ENCODE measurements at regions of chr17 and their contacts with region 1.

Region 1: DNA sequence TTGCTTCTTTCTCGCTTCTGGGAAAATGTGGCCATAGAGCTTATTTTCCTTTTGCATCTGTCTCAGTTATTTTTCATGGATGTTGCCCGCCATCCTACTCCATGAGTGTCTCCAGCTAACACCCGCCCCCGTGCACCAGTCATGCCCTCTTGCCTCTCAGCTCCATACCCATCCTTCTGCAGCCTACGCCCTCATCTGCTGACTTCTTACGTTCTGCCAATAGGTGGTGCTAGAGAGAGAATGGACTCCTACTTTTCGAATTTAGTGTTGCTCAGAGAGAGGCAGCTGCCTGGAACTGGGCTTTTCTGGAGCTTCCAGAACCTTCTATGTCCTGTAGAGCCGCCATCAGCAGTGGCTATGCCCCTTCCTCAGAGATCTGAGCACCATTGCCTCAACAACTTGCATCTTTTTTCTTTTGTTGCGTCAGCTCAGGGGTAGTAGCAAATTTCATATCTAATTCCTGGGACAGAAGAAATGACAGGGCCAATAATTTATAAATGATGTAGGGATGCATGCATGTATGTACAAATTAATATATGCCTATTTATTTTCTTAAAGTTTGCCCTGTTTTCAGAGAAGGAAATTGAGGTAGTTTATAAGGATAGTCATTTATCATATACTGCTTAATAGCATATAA is 119.7 kb upstream of the MYOCD start:
- DNase-seq: no peak
- H3K4me3 ChIP-seq: no peak overlapping the region
- H3K27ac ChIP-seq: no peak overlapping the region
- H3K27me3 ChIP-seq: no peaks in the 10 kb centered on the region
- CTCF ChIP-seq: peak; percentile 87

Region 2: GRCh38 chr17:12478311-12478710 is 67.7 kb before region 1 on chr17:
- CTCF ChIA-PET with region 1: interaction called, 20 read pairs
- POLR2A ChIA-PET with region 1: no interaction called
- DNase-seq: no peak
- H3K4me3 ChIP-seq: no peak overlapping the region
- H3K27ac ChIP-seq: no peak overlapping the region
- H3K27me3 ChIP-seq: no peaks in the 10 kb centered on the region
- CTCF ChIP-seq: no peak

Region 3: DNA sequence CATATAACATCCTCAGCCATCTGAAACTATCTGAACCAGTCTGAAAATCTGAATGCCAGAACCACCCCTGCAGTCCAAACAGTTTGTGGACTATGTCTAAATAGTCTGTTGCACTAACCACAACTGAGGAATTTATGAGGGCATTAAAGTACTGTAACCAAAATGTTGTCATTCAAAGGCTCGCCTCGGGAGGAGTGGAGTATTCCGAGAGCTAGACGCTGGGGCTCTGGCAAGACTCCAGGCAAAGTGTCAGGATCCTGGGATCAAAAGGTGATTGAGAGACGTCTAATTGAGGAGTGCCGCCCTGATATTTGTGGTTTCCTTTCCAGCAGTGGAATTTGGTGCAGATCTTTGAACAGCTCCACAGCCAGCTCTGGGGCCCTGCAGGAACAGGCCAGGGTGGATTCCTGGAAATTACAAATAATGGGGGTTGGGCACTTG is 23.2 kb before region 1 on chr17:
- CTCF ChIA-PET with region 1: interaction called, 21 read pairs
- POLR2A ChIA-PET with region 1: no interaction called
- DNase-seq: no peak
- H3K4me3 ChIP-seq: no peak overlapping the region
- H3K27ac ChIP-seq: no peak overlapping the region
- H3K27me3 ChIP-seq: no peaks in the 10 kb centered on the region
- CTCF ChIP-seq: no peak

Region 4: DNA sequence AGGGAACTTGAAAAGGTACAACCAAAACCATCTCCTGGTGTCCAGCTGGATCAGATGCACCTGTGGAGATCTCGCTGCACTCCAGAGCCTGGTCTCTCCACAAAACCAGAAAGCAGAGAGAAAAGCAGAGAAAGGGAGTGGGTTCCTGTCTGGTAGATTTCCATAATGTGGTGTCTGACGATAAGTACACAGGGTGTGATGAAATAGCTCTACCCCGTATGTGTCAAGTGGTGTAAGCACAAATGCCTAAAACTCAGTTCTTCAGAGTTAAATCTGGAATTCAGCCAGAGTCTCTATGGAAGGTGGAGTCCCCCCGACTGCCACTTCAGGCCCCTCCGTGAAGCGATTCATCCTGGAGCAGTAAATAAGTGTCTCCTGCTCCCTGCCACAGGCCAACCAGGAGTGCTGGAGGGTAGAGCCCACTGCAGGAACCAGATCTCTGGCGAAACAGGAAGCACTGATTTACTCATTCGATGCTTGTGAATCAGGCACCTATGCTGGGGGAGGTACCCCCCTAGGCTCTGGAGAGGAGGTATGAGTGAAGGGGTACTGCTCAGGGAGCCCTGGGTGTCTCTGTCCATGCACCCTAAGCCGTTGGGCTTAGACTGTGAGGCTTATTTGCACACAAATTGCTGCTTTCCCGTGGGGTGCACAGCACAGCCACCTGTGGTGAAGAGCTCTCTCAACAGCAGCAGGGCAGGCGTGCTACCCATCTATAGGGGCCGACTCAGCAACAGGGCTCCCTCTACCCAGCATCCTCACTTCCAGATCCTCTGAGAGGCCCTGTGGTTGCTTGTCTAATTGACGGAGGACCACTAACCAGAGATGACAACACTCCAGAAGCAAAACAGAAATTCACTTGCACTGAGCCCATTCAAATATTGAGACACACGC is 22.6 kb after region 1 on chr17:
- CTCF ChIA-PET with region 1: interaction called, 20 read pairs
- POLR2A ChIA-PET with region 1: no interaction called
- DNase-seq: no peak
- H3K4me3 ChIP-seq: no peak overlapping the region
- H3K27ac ChIP-seq: no peak overlapping the region
- H3K27me3 ChIP-seq: no peaks in the 10 kb centered on the region
- CTCF ChIP-seq: no peak

Region 5: DNA sequence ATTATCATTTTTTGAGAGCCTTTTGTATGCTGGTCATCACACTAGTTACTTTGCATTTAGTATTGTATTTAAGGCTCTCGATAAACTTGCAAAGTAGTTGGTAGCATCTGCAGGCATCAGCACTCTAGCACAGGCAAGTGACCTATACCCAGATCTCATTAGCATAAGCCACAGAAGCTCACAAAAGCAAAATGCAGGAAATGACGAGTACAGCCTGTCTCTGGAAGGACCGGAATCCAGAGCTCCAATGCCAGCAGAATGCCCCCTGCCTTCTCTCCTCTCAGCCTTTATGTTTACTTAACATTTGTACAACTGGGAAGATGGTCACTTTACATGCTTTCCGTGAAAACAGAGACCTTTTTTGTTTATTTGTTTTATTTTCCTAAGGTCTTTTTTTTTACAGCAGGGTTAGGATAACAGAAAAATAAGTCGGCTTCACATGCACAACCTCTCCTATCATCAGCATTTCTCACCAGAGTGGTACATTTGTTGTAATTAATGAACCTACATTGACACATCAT is 74.3 kb after region 1 on chr17:
- CTCF ChIA-PET with region 1: interaction called, 11 read pairs
- POLR2A ChIA-PET with region 1: no interaction called
- DNase-seq: no peak
- H3K4me3 ChIP-seq: no peak overlapping the region
- H3K27ac ChIP-seq: peak overlapping the region; percentile 78
- H3K27me3 ChIP-seq: no peaks in the 10 kb centered on the region
- CTCF ChIP-seq: no peak